ENCODE measurements at regions of chr22 and their contacts with region 1.

Region 1: GRCh38 chr22:36144886-36145541 is 15.5 kb downstream of the APOL3 start:
- DNase-seq: peak; percentile 66
- ATAC-seq: peak; percentile 87 to 88

Region 2: DNA sequence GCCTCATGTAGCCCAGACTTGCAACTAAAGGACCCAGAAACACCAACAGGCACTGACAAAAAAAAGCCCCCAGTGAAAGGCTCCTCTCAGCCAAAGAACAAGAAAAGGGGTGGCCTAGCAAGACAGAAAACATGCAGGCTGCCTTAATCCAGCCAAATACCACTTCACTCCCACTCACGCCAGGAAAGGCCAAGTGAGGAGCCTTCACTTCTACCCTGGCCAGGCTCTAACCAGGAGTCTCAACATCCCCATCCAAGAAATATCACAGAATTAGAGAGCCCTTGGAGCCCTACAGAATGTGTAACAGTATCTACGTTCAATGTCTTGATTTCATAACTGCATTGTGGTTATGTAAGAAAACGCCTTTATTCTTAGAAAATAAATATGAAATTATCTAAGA is 278.4 kb before region 1 on chr22:
- intact Hi-C with region 1: no loop called
- DNase-seq: no peak
- ATAC-seq: peak; percentile 54 to 72

Region 3: DNA sequence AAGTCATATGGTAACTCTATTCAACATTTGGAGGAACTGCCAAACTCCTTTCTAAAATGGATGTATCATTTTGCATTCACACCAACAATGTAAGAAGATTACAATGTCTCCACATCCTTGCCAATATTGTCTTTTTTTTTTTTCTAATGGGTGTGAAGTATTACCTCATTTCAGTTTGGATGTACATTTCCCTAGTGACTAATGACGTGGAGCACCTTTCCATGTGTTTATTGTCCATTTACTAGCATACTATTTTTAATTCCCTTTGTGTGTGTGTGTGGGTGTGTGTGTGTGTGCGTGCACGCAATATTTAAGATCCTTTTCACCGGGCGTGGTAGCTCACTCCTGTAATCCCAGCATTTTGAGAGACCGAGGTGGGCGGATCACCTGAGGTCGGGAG is 47.1 kb before region 1 on chr22:
- intact Hi-C with region 1: no loop called
- DNase-seq: no peak
- ATAC-seq: no peak

Region 4: GRCh38 chr22:36180038-36180880 is 35.2 kb after region 1 on chr22:
- intact Hi-C with region 1: loop called (anchors 2 to 5 kb)
- DNase-seq: peak; percentile 90
- ATAC-seq: peak; percentile 89 to 94

Region 5: GRCh38 chr22:36221799-36222751 is 77.1 kb after region 1 on chr22:
- intact Hi-C with region 1: loop called in 1 of 2 experiments (anchors 10 kb)
- DNase-seq: no peak
- ATAC-seq: peak; percentile 69 to 80

Region 6: GRCh38 chr22:36277482-36278291 is 132.7 kb after region 1 on chr22:
- intact Hi-C with region 1: loop called in 1 of 2 experiments (anchors 5 kb)
- DNase-seq: peak; percentile 66
- ATAC-seq: peak; percentile 67 to 75

Region 7: GRCh38 chr22:36481393-36482168 is 336.6 kb after region 1 on chr22 and contains the start of gene TXN2:
- intact Hi-C with region 1: loop called in 1 of 2 experiments (anchors 10 kb)
- DNase-seq: peak; percentile 98
- ATAC-seq: peak; percentile 95 to 97
- total RNA-seq, gene TXN2: 91.5 to 96.8 TPM

Region 8: GRCh38 chr22:36569999-36570398 is 425.0 kb after region 1 on chr22:
- intact Hi-C with region 1: no loop called
- DNase-seq: no peak
- ATAC-seq: no peak